ENCODE measurements at regions of chr19 and their contacts with region 1.

Region 1: DNA sequence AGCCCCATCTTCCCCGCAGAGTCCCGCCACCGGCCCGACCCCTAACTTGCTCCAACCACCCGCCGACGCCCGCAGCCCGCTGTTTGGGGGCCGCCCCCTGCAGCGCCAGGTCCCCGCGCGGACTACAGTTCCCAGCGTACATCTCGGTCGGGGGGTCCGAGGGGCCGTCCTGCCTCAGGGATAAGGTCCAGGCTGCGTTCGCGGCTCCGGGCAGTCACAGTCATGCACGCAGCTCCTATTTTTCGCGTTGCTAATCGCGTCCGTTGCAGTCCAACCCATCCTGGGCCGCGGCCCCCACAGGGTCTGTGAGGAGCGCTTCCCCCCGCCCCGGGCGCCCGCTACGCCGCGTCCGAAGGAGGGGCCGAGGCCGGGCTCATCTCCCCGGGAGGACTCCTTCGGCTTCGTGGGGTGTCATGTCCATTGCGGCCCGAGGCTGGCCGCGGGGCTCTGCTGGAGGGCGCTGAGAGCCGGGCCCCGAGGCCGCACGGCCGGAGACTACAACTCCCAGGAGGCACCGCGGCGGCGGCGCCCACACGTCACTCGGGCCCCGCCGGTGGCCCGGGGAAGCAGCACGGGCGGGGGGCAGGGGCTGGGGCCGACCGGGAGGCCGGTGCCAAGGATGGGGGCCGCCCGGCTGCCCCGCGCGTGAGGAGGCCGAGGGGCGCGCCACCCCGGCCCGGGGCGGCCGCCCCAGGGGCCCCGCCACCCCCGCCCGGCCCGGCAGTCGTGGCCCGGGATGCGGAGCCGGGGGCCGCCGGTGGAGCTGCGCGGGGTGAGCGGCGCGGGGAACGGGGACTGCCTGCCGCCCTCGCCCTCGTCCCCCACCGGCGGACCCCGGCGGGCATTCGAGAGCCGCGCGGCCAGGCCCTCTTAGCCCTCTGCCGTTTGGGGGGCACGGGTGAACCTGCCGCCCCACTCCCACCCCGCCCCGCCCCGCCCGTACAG is at the start of gene MAP3K10:
- H3K4me3 ChIP-seq: peak within 1 kb of the TSS; percentile 81
- H3K27ac ChIP-seq: peak within 1 kb of the TSS; percentile 99
- H3K4me1 ChIP-seq: peaks cover 19% of the 10 kb centered on the region
- CTCF ChIP-seq: peak; percentile 51; the same call in 1 of the 2 replicates

Region 2: GRCh38 chr19:40221858-40222837 is 31.0 kb after region 1 on chr19:
- CTCF ChIA-PET with region 1: interaction called, 10 read pairs
- POLR2A ChIA-PET with region 1: interaction called, 6 read pairs
- H3K4me3 ChIP-seq: no peak overlapping the region
- H3K27ac ChIP-seq: no peak overlapping the region
- H3K4me1 ChIP-seq: peaks cover 17% of the 10 kb centered on the region
- CTCF ChIP-seq: peak; percentile 93

Region 3: GRCh38 chr19:40274585-40275552 is 83.7 kb after region 1 on chr19:
- CTCF ChIA-PET with region 1: no interaction called
- POLR2A ChIA-PET with region 1: no interaction called
- H3K4me3 ChIP-seq: no peak overlapping the region
- H3K27ac ChIP-seq: peak overlapping the region; percentile 43
- H3K4me1 ChIP-seq: peaks cover 37% of the 10 kb centered on the region
- CTCF ChIP-seq: no peak

Measured in HEK293 (cell line).